ENCODE measurements at regions of chr1 and their contacts with region 1.

Region 1: DNA sequence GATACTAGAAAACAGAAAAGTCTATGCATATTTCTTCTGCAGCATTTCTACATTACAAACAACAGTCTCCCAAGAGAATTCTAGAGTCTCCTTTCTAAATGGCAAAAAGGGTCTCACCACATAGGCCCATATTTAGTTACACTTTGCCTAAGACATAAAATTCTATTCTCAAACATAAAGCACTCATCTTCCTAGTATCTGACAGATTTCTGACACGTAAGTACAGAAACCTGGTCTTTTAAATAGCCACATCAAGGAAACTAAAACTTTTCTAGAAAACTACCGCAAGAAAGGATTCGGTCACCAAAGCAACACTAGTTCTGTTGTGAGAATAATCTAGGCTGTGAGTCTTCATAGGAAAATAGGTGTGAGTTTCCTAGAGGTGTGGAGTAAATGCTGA is 33.6 kb upstream of the CTSK start:
- DNase-seq: peak; percentile 78
- H3K4me3 Mint-ChIP-seq: peak overlapping the region; percentile 35
- H3K27ac Mint-ChIP-seq: peak overlapping the region; percentile 65
- H3K4me1 Mint-ChIP-seq: peaks cover 32% of the 10 kb centered on the region
- H3K27me3 Mint-ChIP-seq: no peaks in the 10 kb centered on the region

Region 2: DNA sequence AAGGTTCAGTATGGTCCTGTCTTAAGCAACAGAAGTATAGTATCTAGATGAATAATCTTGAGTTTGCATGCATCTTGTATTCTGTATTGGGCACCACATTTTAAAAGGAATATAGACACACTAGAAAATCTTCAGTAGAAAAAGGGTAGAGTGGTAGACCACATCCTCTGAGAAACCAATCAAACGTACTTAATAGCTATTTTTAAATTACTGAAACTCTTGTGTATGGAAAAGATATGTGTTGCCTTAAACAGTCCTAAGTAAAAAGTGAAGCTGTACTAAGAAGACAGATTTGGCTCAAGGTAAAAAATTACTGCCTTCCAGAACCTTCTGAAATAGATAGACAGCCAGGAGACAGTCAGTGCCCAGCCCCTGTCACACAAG is 48.4 kb after region 1 on chr1:
- intact Hi-C with region 1: loop called (anchors 1 kb)
- DNase-seq: no peak
- H3K4me3 Mint-ChIP-seq: peak overlapping the region; percentile 39
- H3K27ac Mint-ChIP-seq: peak overlapping the region; percentile 81
- H3K4me1 Mint-ChIP-seq: peaks cover 22% of the 10 kb centered on the region
- H3K27me3 Mint-ChIP-seq: no peaks in the 10 kb centered on the region

Measured in activated CD4-positive, alpha-beta T cell treated with anti-CD3 and anti-CD28 coated beads, Interleukin-2, amount 10 ng/mL, durations not matched to agents 24 days and 14 days (primary cell).